ENCODE measurements at regions of chr3 and their contacts with region 1.

Region 1: GRCh38 chr3:59575113-59576001 is 525.5 kb upstream of the CFAP20DC start:
- DNase-seq: peak; percentile 61 to 97
- H3K4me3 ChIP-seq: no peak overlapping the region
- H3K27ac ChIP-seq: no peak overlapping the region
- H3K4me1 ChIP-seq: no peaks in the 10 kb centered on the region
- H3K27me3 ChIP-seq: no peaks in the 10 kb centered on the region
- CTCF ChIP-seq: peak; percentile 86 to 92 (median 91)
- EP300 ChIP-seq: no peak
- POLR2A ChIP-seq: no peak
- RAD21 ChIP-seq: peak; percentile 95 to 98

Region 2: GRCh38 chr3:59595830-59596229 is 20.5 kb after region 1 on chr3:
- CTCF ChIA-PET with region 1: interaction called, 11 read pairs
- POLR2A ChIA-PET with region 1: no interaction called
- DNase-seq: no peak
- H3K4me3 ChIP-seq: no peak overlapping the region
- H3K27ac ChIP-seq: no peak overlapping the region
- H3K4me1 ChIP-seq: peaks cover 0 to 2% (median 0%) of the 10 kb centered on the region in 4 experiments; a peak in 2 of 7 replicates
- H3K27me3 ChIP-seq: no peaks in the 10 kb centered on the region
- CTCF ChIP-seq: no peak
- EP300 ChIP-seq: no peak
- POLR2A ChIP-seq: no peak
- RAD21 ChIP-seq: no peak

Region 3: GRCh38 chr3:59857589-59858346 is 282.4 kb after region 1 on chr3:
- CTCF ChIA-PET with region 1: interaction called, 26 read pairs
- POLR2A ChIA-PET with region 1: no interaction called
- DNase-seq: peak; percentile 51 to 82
- H3K4me3 ChIP-seq: no peak overlapping the region
- H3K27ac ChIP-seq: no peak overlapping the region
- H3K4me1 ChIP-seq: peaks cover 0 to 4% (median 0%) of the 10 kb centered on the region in 4 experiments; a peak in 1 of 7 replicates
- H3K27me3 ChIP-seq: no peaks in the 10 kb centered on the region
- CTCF ChIP-seq: peak; percentile 83 to 98 (median 88)
- EP300 ChIP-seq: no peak
- POLR2A ChIP-seq: no peak
- RAD21 ChIP-seq: peak; percentile 81 to 88

Measured in H1 (cell line).